Activated T-helper 1 cell treated with anti-CD3 and anti-CD28 coated beads, Interleukin-12 subunit alpha, Interleukin-12 subunit beta, Interleukin-2, Interleukin-4 antibody, amounts not matched to agents 30 ng/mL and 10 ng/mL and 1 ng/mL, durations not matched to agents 14 hours and 24 hours and 36 hours (primary cell): ENCODE measurements at regions of chr10 and their contacts with region 1.

Region 1: DNA sequence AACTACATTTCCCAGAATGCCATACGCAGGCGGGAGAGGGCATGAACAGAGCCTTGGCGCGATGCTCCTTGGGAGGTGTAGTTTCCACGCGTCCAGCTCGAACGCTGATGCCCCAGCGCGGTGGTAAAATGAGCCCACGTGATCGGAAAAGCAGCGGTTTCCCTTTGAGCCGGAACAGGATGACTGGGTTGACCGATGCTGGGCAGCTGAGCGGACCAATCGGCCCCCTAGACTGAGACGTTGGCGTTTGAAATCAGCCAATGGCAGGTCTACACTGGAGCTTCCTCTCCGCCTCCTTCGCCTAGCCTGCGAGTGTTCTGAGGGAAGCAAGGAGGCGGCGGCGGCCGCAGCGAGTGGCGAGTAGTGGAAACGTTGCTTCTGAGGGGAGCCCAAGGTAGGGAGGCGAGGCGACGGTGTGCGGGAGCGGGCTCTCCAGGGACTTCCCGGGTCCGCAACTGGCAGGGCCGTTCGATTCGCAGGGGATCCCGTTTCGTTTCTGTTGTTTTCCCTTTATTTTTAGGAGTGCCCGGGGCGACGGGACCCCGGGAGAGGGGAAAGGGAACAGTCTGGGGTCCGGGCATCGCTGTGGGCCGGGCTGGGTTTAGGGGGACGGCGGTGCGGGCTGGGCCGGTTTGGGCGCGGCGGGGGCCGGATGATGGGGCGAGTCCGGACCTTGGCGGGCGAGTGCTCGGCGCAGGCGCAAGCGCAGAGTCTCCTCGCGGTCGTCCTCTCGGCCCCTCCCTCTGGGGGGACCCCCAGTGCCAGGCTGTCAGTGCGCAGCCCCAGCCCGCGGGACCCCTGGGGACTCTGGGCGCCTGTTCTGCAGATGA is at the start of gene BUB3:
- DNase-seq: peak; percentile 94
- H3K4me3 Mint-ChIP-seq: peak within 1 kb of the TSS; percentile 100
- H3K27ac Mint-ChIP-seq: peak within 1 kb of the TSS; percentile 100
- H3K4me1 Mint-ChIP-seq: peaks cover 61% of the 10 kb centered on the region
- H3K27me3 Mint-ChIP-seq: peaks cover 14% of the 10 kb centered on the region
- total RNA-seq, gene BUB3: 197 and 201 TPM in 2 replicates

Region 2: GRCh38 chr10:121927841-121928527 is 1226.3 kb before region 1 on chr10 and contains the start of gene ATE1:
- intact Hi-C with region 1: loop called (anchors 10 kb)
- DNase-seq: peak; percentile 82
- H3K4me3 Mint-ChIP-seq: peak within 1 kb of the TSS; percentile 91
- H3K27ac Mint-ChIP-seq: peak within 1 kb of the TSS; percentile 96
- H3K4me1 Mint-ChIP-seq: peaks cover 19% of the 10 kb centered on the region
- H3K27me3 Mint-ChIP-seq: no peaks in the 10 kb centered on the region
- total RNA-seq, gene ATE1: 37.5 and 40.2 TPM in 2 replicates

Region 3: DNA sequence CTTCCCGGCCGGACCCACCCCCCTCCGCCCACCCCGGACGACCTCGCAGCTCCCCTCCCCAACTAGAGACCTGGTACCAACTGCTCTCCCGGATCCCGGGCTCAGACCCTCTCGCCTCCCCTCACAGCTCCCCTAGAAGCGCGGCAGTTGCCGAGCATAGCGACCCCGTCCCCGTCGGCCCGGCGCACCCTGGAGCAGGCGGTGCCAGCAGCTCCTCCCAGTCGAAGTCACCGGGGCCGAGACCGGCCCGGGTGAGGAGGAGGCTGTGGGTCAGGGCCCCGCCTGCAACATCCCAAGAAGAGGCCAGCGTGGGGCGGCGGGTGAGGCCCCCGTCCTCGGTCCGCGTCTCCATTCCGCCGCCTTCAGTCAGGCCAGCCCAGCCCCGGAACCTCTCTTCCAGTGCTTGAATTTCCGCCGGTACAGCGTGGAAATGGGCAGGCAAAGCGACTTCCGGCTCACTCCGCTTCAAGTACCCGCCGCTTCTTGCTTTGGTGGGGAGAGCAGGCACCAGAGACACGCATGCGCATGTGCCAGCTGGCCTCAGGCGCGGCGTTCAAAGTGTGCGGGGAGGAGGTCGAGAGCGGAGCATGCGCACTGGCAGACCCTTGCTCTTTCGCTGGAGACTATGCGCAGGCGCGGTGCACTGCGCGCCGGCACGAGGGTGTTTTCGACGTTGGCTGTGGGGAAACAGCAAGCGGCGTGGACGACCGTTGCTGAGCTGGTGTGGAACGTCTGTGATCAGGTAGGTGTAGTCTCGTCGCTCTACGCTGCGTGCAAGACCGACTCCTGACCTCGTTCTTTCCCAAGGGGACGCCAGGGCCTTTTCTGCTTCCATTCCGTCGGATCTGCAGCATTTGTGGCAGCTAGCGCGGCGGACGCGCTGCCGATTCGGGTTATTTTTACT is 200.2 kb before region 1 on chr10 and contains the start of gene C10orf88:
- intact Hi-C with region 1: loop called (anchors 1 kb)
- DNase-seq: peak; percentile 97
- H3K4me3 Mint-ChIP-seq: peak within 1 kb of the TSS; percentile 87
- H3K27ac Mint-ChIP-seq: peak within 1 kb of the TSS; percentile 88
- H3K4me1 Mint-ChIP-seq: peaks cover 47% of the 10 kb centered on the region
- H3K27me3 Mint-ChIP-seq: peaks cover 15% of the 10 kb centered on the region
- total RNA-seq, gene C10orf88: 11.8 and 14.1 TPM in 2 replicates

Region 4: DNA sequence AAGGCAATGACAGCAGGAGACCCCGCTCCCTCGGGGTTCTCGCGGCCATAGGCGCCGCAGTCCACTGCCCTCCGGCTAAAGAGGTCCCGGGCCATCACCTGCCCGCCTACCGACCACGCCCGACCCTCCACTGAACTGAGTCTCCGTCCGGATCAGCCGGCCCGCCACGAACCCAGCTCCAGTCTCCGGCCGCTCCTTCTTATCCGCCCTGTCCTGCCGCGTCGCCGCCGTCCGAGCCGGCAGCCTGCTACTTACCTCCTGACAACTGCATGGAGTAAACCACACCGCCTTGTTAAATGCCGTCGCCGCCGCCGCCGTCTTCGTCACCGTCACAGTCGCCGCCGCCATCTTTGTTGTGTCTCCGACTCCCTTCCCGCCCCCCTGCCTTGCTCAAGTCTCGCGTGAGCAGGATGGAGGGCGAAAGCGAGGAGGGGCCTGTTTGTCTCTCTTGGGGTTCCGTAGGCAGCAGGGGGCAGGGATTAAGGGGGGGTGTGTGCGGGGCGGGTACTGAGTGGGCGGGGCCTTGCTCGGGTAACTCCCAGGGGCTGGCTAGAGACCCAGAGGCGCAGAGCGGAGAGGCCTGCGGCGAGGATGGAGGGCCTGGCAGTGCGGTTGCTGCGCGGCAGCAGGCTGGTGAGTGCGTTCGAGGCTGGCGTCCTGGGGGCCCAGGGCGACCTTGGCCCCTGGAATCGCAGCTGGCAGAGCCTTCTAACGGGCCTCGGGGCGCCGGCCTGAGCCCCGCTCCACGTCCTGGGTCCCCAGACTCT is 145.7 kb before region 1 on chr10 and contains the starts of genes ACADSB and IKZF5:
- intact Hi-C with region 1: loop called (anchors 1 kb)
- DNase-seq: peak; percentile 94
- H3K4me3 Mint-ChIP-seq: peak within 1 kb of the TSS; percentile 95
- H3K27ac Mint-ChIP-seq: peak within 1 kb of the TSS; percentile 95
- H3K4me1 Mint-ChIP-seq: peaks cover 43% of the 10 kb centered on the region
- H3K27me3 Mint-ChIP-seq: no peaks in the 10 kb centered on the region
- total RNA-seq, gene ACADSB: 25.8 and 26.5 TPM in 2 replicates
- total RNA-seq, gene IKZF5: 17.4 and 21.9 TPM in 2 replicates

Region 5: DNA sequence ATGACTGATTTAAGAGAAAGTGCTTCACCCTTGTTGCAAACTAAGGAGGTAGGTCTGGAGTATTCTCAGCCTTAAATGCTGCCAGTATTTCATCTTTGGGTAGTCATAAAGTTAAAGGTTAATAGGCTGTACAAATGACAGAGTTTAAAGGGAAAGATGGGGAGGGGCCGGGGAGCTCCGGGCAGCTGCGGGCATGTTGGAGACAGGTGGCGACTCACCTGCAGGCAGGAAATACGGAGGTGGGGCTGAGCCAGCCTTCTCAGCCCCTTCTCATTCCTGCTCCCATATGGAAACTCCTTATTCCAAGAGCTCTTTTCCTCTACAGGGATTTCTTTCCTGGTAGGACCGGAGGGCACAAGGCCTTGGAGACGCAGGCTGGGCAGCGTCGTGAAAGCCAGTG is 50.4 kb before region 1 on chr10:
- intact Hi-C with region 1: no loop called
- DNase-seq: no peak
- H3K4me3 Mint-ChIP-seq: no peak overlapping the region
- H3K27ac Mint-ChIP-seq: no peak overlapping the region
- H3K4me1 Mint-ChIP-seq: no peaks in the 10 kb centered on the region
- H3K27me3 Mint-ChIP-seq: no peaks in the 10 kb centered on the region

Region 6: DNA sequence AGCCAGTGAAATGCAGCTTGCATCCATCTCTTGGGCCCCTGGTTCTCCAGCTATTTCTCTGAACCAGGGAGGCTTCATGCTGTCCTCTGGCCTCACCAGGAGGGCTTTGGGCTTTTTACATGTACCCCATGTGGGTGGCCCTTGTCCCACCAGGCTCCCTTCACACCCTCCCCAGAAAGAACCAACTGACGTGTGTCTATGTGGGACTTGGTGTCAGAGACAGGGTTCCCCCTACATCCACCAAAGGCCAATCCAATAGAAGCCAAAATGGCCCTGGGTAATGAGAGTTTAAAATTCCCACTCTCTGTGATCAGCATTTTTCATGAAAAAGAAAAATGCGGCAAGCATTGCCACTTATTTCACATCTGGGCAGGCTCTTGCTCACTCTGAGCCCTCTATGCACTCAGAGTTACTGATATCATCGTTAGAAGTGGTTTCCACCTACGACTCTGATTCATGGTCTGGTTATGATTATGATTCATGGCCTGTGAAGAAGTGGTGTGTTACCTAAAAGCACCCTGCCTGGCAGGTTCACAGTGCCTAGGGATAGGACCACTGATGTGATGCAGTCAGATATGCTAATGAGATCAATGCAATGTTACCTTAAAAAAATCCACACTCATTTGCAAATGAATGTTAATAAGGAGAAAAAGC is 133.4 kb after region 1 on chr10:
- intact Hi-C with region 1: loop called (anchors 2 kb)
- DNase-seq: no peak
- H3K4me3 Mint-ChIP-seq: no peak overlapping the region
- H3K27ac Mint-ChIP-seq: no peak overlapping the region
- H3K4me1 Mint-ChIP-seq: peaks cover 9% of the 10 kb centered on the region
- H3K27me3 Mint-ChIP-seq: peaks cover 6% of the 10 kb centered on the region

Region 7: GRCh38 chr10:123442901-123443300 is 288.6 kb after region 1 on chr10:
- intact Hi-C with region 1: no loop called
- DNase-seq: no peak
- H3K4me3 Mint-ChIP-seq: no peak overlapping the region
- H3K27ac Mint-ChIP-seq: no peak overlapping the region
- H3K4me1 Mint-ChIP-seq: no peaks in the 10 kb centered on the region
- H3K27me3 Mint-ChIP-seq: no peaks in the 10 kb centered on the region

Region 8: DNA sequence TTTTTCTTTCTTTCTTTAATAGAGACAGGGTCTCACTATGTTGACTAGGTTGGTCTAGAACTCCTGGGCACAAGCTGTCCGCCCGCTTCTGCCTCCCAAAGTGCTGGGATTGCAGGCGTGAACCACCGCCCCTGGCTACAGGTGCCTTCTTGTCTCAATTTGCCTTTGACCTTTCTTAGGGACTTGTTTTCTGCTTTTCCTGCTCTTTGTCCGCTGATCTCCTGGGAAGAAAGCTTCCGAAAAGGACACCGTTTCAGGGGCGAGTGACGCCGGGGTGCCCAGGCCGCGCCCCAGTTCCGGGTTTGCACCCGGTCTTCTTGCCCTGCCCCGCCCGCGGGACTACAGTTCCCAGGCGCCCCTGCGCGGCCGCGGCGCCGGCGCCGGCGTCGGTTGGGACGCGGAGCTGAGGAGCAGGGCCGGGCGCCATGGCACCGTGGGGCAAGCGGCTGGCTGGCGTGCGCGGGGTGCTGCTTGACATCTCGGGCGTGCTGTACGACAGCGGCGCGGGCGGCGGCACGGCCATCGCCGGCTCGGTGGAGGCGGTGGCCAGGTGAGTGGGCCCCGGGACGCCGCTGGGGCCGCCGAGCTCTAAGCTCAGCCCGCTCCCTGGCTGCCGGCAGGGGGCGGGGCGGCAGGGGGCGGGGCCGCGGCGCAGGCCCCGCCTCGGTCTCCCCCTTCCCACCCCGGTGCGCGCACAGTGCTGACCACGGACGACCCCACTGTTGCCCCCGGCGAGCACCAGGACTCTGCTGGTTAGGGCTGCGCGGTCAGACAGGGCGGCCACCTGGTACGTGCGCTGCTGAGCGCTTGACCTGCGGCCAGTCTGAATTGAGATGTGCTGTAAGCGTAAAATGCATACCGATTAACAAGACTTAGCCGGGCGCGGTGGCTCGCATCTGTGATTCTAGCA is 1307.4 kb after region 1 on chr10 and contains the start of gene LHPP:
- intact Hi-C with region 1: loop called (anchors 5 kb)
- DNase-seq: peak; percentile 86
- H3K4me3 Mint-ChIP-seq: peak within 1 kb of the TSS; percentile 87
- H3K27ac Mint-ChIP-seq: peak within 1 kb of the TSS; percentile 98
- H3K4me1 Mint-ChIP-seq: peaks cover 26% of the 10 kb centered on the region
- H3K27me3 Mint-ChIP-seq: peaks cover 14% of the 10 kb centered on the region
- total RNA-seq, gene LHPP: 4.6 and 5.0 TPM in 2 replicates